Psoas muscle (tissue), 8 donors: ENCODE measurements at regions of chr4 and their contacts with region 1.

Region 1: DNA sequence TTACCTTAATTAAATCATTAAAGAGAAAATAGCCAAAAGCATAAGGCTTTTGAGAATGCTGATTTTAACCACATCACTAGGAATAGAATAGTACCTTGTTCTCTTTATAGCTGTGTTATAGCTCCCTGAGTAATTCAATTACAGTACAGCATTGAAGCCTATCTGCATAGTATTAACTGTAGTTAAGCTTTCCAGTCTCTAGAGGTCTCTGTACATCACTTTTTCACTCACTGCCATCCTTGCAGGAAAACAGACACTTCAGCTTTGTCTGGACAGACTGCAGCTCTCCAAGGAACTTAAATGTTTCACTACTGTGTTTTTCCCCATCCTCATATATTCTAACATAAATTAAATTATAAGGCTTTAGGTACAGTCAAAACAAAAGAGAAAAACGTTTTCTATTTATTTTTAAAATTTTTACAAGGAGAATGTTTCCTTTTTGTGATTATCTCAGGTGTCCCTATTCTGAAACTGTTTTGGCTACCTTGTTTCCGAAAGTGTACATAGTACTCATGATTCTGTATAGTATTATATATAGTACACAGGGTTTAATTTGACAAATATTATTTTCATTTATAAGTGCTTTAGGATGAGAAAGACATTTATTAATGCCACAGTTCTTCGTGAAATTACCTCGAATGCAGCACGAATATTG is 407.9 kb downstream of the PCDH18 start:
- DNase-seq: no peak
- ATAC-seq: peak; percentile 68 to 96 (median 86)
- H3K4me3 ChIP-seq: peak overlapping the region; percentile 53
- H3K27ac ChIP-seq: no peak overlapping the region
- H3K4me1 ChIP-seq: no peaks in the 10 kb centered on the region
- H3K27me3 ChIP-seq: no peaks in the 10 kb centered on the region
- CTCF ChIP-seq: peak; percentile 58

Region 2: GRCh38 chr4:137861682-137862081 is 737.3 kb after region 1 on chr4:
- intact Hi-C with region 1: loop called in 1 of 2 experiments (anchors 10 kb)
- DNase-seq: no peak
- ATAC-seq: no peak
- H3K4me3 ChIP-seq: no peak overlapping the region
- H3K27ac ChIP-seq: no peak overlapping the region
- H3K4me1 ChIP-seq: no peaks in the 10 kb centered on the region
- H3K27me3 ChIP-seq: no peaks in the 10 kb centered on the region
- CTCF ChIP-seq: peak; percentile 41

Region 3: GRCh38 chr4:138090150-138090917 is 965.9 kb after region 1 on chr4:
- intact Hi-C with region 1: loop called in 1 of 2 experiments (anchors 10 kb)
- DNase-seq: peak in 1 of 2 donors; percentile 15
- ATAC-seq: peak; percentile 70 to 85 (median 76)
- H3K4me3 ChIP-seq: peak overlapping the region; percentile 50
- H3K27ac ChIP-seq: no peak overlapping the region
- H3K4me1 ChIP-seq: peaks cover 14% of the 10 kb centered on the region
- H3K27me3 ChIP-seq: no peaks in the 10 kb centered on the region
- CTCF ChIP-seq: peak; percentile 79

Region 4: GRCh38 chr4:138174981-138175794 is 1050.8 kb after region 1 on chr4:
- intact Hi-C with region 1: loop called (anchors 10 kb)
- DNase-seq: no peak
- ATAC-seq: peak; percentile 57 to 81 (median 74)
- H3K4me3 ChIP-seq: no peak overlapping the region
- H3K27ac ChIP-seq: no peak overlapping the region
- H3K4me1 ChIP-seq: no peaks in the 10 kb centered on the region
- H3K27me3 ChIP-seq: no peaks in the 10 kb centered on the region
- CTCF ChIP-seq: no peak

Region 5: DNA sequence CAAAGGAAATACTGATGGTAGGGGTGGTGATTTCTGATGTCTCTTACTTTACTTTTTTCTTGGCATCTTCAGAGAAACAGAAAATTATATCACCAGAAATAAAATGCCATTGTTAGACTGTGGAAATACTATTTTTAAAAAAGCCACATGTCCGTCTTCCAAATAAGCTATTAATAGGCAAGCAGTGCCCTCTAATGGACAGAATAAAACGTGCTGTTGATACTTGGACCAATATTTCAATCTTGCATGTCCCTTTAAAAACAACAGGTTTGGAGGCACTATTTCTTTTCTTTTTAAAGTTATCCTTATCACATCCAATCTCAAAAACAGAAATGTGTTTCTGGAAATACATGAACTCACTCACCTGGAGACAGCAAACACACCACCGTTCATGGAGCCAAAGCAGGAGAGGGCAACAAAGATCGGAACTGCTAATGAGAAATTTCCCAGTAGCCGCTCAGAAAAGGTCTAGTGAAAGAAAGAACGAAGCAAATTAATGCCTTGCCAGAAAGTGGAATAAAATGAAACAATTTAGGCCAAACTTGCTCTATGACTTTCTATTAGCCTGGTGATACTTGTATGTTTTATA is 1058.5 kb after region 1 on chr4:
- intact Hi-C with region 1: loop called (anchors 10 kb)
- DNase-seq: no peak
- ATAC-seq: peak; percentile 48 to 89 (median 74)
- H3K4me3 ChIP-seq: no peak overlapping the region
- H3K27ac ChIP-seq: no peak overlapping the region
- H3K4me1 ChIP-seq: peaks cover 19% of the 10 kb centered on the region
- H3K27me3 ChIP-seq: no peaks in the 10 kb centered on the region
- CTCF ChIP-seq: peak; percentile 76

Region 6: DNA sequence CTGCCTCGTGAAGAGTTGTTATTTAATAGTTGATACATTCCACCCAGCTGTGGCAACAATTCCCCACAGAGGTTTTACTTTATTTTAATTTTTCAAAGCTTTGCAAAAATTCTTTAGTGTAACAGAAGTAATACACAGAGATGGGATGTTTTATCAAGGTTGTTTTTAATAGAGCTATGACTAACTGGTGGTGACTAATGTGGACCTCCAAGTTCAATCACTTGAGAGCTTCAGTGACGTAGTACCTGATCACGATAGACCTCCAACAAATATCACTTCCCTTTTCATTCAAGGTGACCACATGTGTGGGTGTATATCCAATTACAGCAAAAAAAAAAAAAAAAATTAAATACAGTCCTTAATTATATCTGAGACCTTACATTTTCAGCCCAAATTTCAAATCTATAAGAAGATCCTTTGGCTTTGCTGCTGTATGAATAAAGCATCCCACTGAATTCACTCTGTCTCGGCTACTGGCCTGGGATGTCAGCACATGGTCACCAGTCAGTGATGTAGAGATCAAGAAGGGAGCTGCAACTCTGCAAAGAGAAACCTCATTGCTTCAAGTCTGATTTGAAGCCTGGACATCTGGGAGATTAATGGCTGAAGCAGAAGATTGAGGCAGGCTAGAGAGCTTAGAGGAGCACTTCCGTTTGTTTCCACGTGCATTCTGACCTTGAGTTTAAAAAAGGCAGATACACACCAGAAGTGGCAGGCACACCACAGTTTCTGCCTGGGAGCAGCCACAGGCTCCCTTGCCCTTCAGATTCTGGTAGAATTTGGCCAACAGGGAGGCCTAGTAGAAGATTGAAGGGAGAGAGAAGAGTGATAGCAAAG is 1545.3 kb after region 1 on chr4:
- intact Hi-C with region 1: loop called in 1 of 2 experiments (anchors 10 kb)
- DNase-seq: no peak
- ATAC-seq: no peak
- H3K4me3 ChIP-seq: no peak overlapping the region
- H3K27ac ChIP-seq: no peak overlapping the region
- H3K4me1 ChIP-seq: no peaks in the 10 kb centered on the region
- H3K27me3 ChIP-seq: no peaks in the 10 kb centered on the region
- CTCF ChIP-seq: no peak

Region 7: DNA sequence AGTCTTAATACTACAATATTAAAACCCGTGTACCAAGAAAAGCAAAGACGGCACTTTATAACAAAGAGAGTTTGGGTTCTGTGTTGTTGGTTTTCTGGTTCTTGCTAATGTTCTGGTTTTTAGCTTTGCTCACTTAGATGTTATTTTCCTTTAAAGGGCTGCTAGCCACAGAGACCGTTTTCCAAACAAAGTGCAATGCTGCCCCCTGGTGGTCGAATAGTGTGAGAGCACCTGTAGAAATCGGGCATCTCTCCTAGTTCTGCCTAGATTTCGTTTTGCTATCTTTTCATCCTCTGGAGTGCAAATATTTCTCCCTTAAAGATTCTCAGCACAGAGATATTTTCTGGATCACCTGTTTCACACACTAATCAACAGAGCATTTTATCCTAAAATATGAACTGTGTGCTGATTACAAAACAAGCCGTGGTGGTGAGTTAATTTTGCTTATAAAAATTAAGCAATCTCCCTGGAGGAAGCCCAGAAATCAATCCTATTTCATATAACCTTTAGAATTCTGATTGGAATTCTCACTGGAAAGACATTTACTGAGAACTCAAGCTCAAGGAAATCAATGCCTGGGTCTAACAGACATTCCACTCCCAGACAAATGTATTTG is 1556.7 kb after region 1 on chr4:
- intact Hi-C with region 1: loop called (anchors 10 kb)
- DNase-seq: peak; percentile 71 to 80
- ATAC-seq: peak; percentile 54 to 87 (median 70)
- H3K4me3 ChIP-seq: no peak overlapping the region
- H3K27ac ChIP-seq: no peak overlapping the region
- H3K4me1 ChIP-seq: no peaks in the 10 kb centered on the region
- H3K27me3 ChIP-seq: no peaks in the 10 kb centered on the region
- CTCF ChIP-seq: peak; percentile 97